ENCODE measurements at regions of chr2 and their contacts with region 1.

Region 1: GRCh38 chr2:218395797-218396687 is 3.6 kb upstream of the CTDSP1 start:
- DNase-seq: peak; percentile 87 to 98 (median 94)
- ATAC-seq: peak; percentile 74
- H3K4me3 ChIP-seq: peak overlapping the region; percentile 83 to 99
- H3K4me3 Mint-ChIP-seq: peak overlapping the region; percentile 95
- H3K27ac ChIP-seq: peak overlapping the region; percentile 92 to 98
- H3K27ac Mint-ChIP-seq: peak overlapping the region; percentile 98
- H3K4me1 ChIP-seq: peaks cover 40% of the 10 kb centered on the region
- H3K4me1 Mint-ChIP-seq: peaks cover 43% of the 10 kb centered on the region
- H3K27me3 ChIP-seq: no peaks in the 10 kb centered on the region
- H3K27me3 Mint-ChIP-seq: no peaks in the 10 kb centered on the region
- CTCF ChIP-seq: peak; percentile 83

Region 2: GRCh38 chr2:218286570-218287459 is 109.2 kb before region 1 on chr2:
- CTCF ChIA-PET with region 1: interaction called, 18 read pairs
- POLR2A ChIA-PET with region 1: interaction called, 23 read pairs
- intact Hi-C with region 1: loop called (anchors 1 to 2 kb)
- DNase-seq: peak; percentile 56 to 97 (median 80)
- ATAC-seq: peak; percentile 62
- H3K4me3 ChIP-seq: peak overlapping the region; percentile 51 to 60
- H3K4me3 Mint-ChIP-seq: peak overlapping the region; percentile 90
- H3K27ac ChIP-seq: peak overlapping the region; percentile 87 to 99
- H3K27ac Mint-ChIP-seq: peak overlapping the region; percentile 100
- H3K4me1 ChIP-seq: peaks cover 93% of the 10 kb centered on the region
- H3K4me1 Mint-ChIP-seq: peaks cover 78% of the 10 kb centered on the region
- H3K27me3 ChIP-seq: no peaks in the 10 kb centered on the region
- H3K27me3 Mint-ChIP-seq: no peaks in the 10 kb centered on the region
- CTCF ChIP-seq: no peak

Region 3: DNA sequence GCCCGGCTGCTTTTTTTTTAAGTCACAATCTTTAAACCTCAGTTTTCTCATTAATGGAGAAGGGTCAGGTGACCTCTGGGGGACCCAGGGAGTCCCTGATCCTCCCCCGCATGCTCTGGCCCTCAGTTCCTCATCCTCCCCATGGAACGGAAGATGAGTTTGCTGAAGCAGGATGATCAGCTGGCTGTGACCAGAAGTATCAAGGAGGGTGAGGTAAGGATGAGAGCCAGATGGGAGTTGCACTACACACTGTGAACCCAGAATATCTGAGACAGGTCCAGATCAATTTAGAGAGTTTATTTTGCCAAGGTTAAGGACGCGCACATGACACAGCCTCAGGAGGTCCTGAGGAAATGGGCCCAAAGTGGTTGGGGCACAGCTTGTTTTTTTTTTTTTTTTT is 35.6 kb before region 1 on chr2:
- CTCF ChIA-PET with region 1: interaction called, 15 read pairs
- POLR2A ChIA-PET with region 1: interaction called, 8 read pairs
- intact Hi-C with region 1: loop called (anchors 2 to 5 kb)
- DNase-seq: peak in 1 of 9 experiments; percentile 17
- ATAC-seq: no peak
- H3K4me3 ChIP-seq: no peak overlapping the region
- H3K4me3 Mint-ChIP-seq: no peak overlapping the region
- H3K27ac ChIP-seq: no peak overlapping the region
- H3K27ac Mint-ChIP-seq: no peak overlapping the region
- H3K4me1 ChIP-seq: no peaks in the 10 kb centered on the region
- H3K4me1 Mint-ChIP-seq: peaks cover 3% of the 10 kb centered on the region
- H3K27me3 ChIP-seq: no peaks in the 10 kb centered on the region
- H3K27me3 Mint-ChIP-seq: no peaks in the 10 kb centered on the region
- CTCF ChIP-seq: no peak

Region 4: GRCh38 chr2:218536804-218537494 is 140.9 kb after region 1 on chr2:
- CTCF ChIA-PET with region 1: no interaction called
- POLR2A ChIA-PET with region 1: no interaction called
- intact Hi-C with region 1: no loop called
- DNase-seq: no peak
- ATAC-seq: no peak
- H3K4me3 ChIP-seq: no peak overlapping the region
- H3K4me3 Mint-ChIP-seq: no peak overlapping the region
- H3K27ac ChIP-seq: no peak overlapping the region
- H3K27ac Mint-ChIP-seq: no peak overlapping the region
- H3K4me1 ChIP-seq: no peaks in the 10 kb centered on the region
- H3K4me1 Mint-ChIP-seq: no peaks in the 10 kb centered on the region
- H3K27me3 ChIP-seq: no peaks in the 10 kb centered on the region
- H3K27me3 Mint-ChIP-seq: no peaks in the 10 kb centered on the region
- CTCF ChIP-seq: no peak

Region 5: GRCh38 chr2:218568190-218569037 is 172.4 kb after region 1 on chr2 and contains the starts of genes CNOT9 and USP37:
- CTCF ChIA-PET with region 1: no interaction called
- POLR2A ChIA-PET with region 1: interaction called, 3 read pairs
- intact Hi-C with region 1: loop called (anchors 2 kb)
- DNase-seq: peak; percentile 99 to 100 (median 100)
- ATAC-seq: peak; percentile 90
- H3K4me3 ChIP-seq: peak within 1 kb of the TSS; percentile 84 to 92
- H3K4me3 Mint-ChIP-seq: peak within 1 kb of the TSS; percentile 96
- H3K27ac ChIP-seq: peak within 1 kb of the TSS; percentile 91 to 99
- H3K27ac Mint-ChIP-seq: peak within 1 kb of the TSS; percentile 98
- H3K4me1 ChIP-seq: peaks cover 45% of the 10 kb centered on the region
- H3K4me1 Mint-ChIP-seq: peaks cover 63% of the 10 kb centered on the region
- H3K27me3 ChIP-seq: no peaks in the 10 kb centered on the region
- H3K27me3 Mint-ChIP-seq: no peaks in the 10 kb centered on the region
- CTCF ChIP-seq: no peak
- total RNA-seq, gene CNOT9: 73.9 to 79.3 TPM
- total RNA-seq, gene USP37: 22.8 to 23.2 TPM

Region 6: DNA sequence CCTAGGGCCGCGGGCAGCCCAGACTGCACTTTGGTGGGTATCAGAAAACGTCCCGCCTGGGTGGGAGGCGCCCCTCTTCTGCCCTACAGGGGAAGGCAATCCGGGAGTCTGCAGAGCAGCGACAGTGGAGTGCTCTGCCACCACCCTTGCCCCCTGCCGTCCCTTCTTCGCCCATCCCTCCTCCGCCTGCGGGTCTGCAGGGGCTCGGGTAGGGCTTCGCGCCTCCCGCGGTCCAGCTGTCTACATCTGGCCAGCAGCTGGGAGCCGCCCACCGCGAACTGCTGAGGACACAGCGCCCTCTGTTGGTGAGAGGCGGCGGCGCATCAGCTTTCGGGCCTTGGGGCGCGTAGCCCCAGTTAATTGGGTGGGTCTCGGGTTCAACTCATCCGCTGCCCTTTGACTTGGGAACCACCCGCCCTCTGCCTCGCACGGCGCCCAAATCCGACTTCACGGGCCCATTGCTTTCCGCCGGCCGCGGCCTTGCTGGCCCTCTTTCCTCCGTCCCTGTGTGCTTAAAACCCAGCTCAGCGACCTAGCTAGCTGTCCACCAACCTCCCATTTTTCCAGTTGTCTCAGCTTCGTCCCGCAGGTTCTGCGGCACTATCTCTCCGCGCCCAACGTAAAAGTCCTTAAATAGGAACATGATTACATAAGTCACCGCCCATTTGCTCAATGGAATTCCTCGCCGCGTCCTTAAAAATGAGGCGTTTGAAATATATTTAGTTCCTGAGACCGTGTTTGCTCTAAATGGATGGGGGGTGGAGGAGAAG is 502.3 kb after region 1 on chr2:
- CTCF ChIA-PET with region 1: no interaction called
- POLR2A ChIA-PET with region 1: no interaction called
- intact Hi-C with region 1: loop called (anchors 5 kb)
- DNase-seq: peak; percentile 60 to 90 (median 81)
- ATAC-seq: peak; percentile 10
- H3K4me3 ChIP-seq: peak overlapping the region in 1 of 2 experiments; percentile 57
- H3K4me3 Mint-ChIP-seq: peak overlapping the region; percentile 80
- H3K27ac ChIP-seq: no peak overlapping the region
- H3K27ac Mint-ChIP-seq: no peak overlapping the region
- H3K4me1 ChIP-seq: peaks cover 54% of the 10 kb centered on the region
- H3K4me1 Mint-ChIP-seq: peaks cover 45% of the 10 kb centered on the region
- H3K27me3 ChIP-seq: peaks cover 7 to 33% of the 10 kb centered on the region in 2 experiments
- H3K27me3 Mint-ChIP-seq: peaks cover 30% of the 10 kb centered on the region
- CTCF ChIP-seq: peak; percentile 99

Region 7: GRCh38 chr2:219245148-219245898 is 849.3 kb after region 1 on chr2 and contains the starts of genes GLB1L and STK16:
- CTCF ChIA-PET with region 1: no interaction called
- POLR2A ChIA-PET with region 1: no interaction called
- intact Hi-C with region 1: loop called (anchors 5 to 10 kb)
- DNase-seq: peak; percentile 67 to 94 (median 87)
- ATAC-seq: peak; percentile 37
- H3K4me3 ChIP-seq: peak within 1 kb of the TSS; percentile 68 to 94
- H3K4me3 Mint-ChIP-seq: peak within 1 kb of the TSS; percentile 94
- H3K27ac ChIP-seq: peak within 1 kb of the TSS; percentile 89 to 96
- H3K27ac Mint-ChIP-seq: peak within 1 kb of the TSS; percentile 99
- H3K4me1 ChIP-seq: peaks cover 58% of the 10 kb centered on the region
- H3K4me1 Mint-ChIP-seq: peaks cover 68% of the 10 kb centered on the region
- H3K27me3 ChIP-seq: no peaks in the 10 kb centered on the region
- H3K27me3 Mint-ChIP-seq: no peaks in the 10 kb centered on the region
- CTCF ChIP-seq: no peak
- total RNA-seq, gene GLB1L: 1.7 to 2.8 TPM
- total RNA-seq, gene STK16: 12.9 to 13.2 TPM

Measured in CD8-positive, alpha-beta T cell (primary cell).